Mammary epithelial cell (primary cell): ENCODE measurements at regions of chr12 and their contacts with region 1.

Region 1: DNA sequence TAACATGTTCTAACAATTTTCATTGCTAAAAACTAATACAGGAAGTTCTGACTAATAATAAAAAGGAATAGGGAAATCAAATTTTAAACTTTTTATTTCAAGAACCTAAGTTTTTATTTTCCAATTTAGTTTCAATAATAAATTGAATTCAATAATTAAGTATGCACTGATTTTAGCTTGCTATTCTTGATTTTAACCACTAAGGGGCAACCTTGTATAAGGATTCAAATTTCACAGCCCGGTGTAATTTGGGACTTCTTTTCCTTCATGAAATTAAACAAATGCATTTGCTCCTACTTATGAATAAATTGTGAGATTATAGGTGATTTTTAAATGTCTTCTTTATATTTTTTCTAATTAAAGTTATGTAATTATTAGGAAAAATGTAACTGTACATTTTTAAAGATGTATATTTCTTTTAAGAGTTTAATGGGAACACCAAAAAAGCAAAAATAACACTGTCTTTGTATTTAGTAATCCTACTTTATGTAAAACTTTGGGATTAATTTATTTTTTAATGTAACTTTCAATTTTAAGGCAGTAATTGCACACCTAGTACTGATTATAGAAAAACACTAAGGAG is 241.4 kb upstream of the PDZRN4 start:
- DNase-seq: no peak
- H3K4me3 ChIP-seq: no peak overlapping the region
- H3K27ac ChIP-seq: no peak overlapping the region
- H3K4me1 ChIP-seq: no peaks in the 10 kb centered on the region
- H3K27me3 ChIP-seq: no peaks in the 10 kb centered on the region
- CTCF ChIP-seq: peak; percentile 47 to 52

Region 2: GRCh38 chr12:40988824-40989223 is 42.1 kb after region 1 on chr12:
- CTCF ChIA-PET with region 1: no interaction called
- dilution Hi-C with region 1: no loop called
- in situ Hi-C with region 1: no loop called
- intact Hi-C with region 1: no loop called
- DNase-seq: no peak
- H3K4me3 ChIP-seq: no peak overlapping the region
- H3K27ac ChIP-seq: no peak overlapping the region
- H3K4me1 ChIP-seq: no peaks in the 10 kb centered on the region
- H3K27me3 ChIP-seq: no peaks in the 10 kb centered on the region
- CTCF ChIP-seq: no peak

Region 3: GRCh38 chr12:41264281-41264680 is 317.6 kb after region 1 on chr12:
- CTCF ChIA-PET with region 1: no interaction called
- dilution Hi-C with region 1: no loop called
- in situ Hi-C with region 1: loop called in 1 of 2 experiments (anchors 25 kb)
- intact Hi-C with region 1: loop called (anchors 2 kb)
- DNase-seq: no peak
- H3K4me3 ChIP-seq: no peak overlapping the region
- H3K27ac ChIP-seq: no peak overlapping the region
- H3K4me1 ChIP-seq: no peaks in the 10 kb centered on the region
- H3K27me3 ChIP-seq: peaks cover 2% of the 10 kb centered on the region
- CTCF ChIP-seq: peak; percentile 44 to 48

Region 4: GRCh38 chr12:41663598-41664258 is 717.0 kb after region 1 on chr12:
- CTCF ChIA-PET with region 1: no interaction called
- dilution Hi-C with region 1: no loop called
- in situ Hi-C with region 1: no loop called
- intact Hi-C with region 1: loop called (anchors 10 kb)
- DNase-seq: peak; percentile 3
- H3K4me3 ChIP-seq: no peak overlapping the region
- H3K27ac ChIP-seq: no peak overlapping the region
- H3K4me1 ChIP-seq: no peaks in the 10 kb centered on the region
- H3K27me3 ChIP-seq: no peaks in the 10 kb centered on the region
- CTCF ChIP-seq: peak; percentile 42 to 59